ENCODE measurements at regions of chr6 and their contacts with region 1.

Region 1: GRCh38 chr6:33914645-33915044 is 110.8 kb upstream of the MLN start:
- DNase-seq: peak in 13 of 14 experiments; percentile 24 to 75 (median 45)
- ATAC-seq: peak; percentile 92
- H3K4me3 ChIP-seq: peak overlapping the region; percentile 10
- H3K4me3 Mint-ChIP-seq: peak overlapping the region; percentile 81
- H3K27ac ChIP-seq: peak overlapping the region in 1 of 2 donors; percentile 55
- H3K27ac Mint-ChIP-seq: peak overlapping the region; percentile 71
- H3K4me1 ChIP-seq: peaks cover 57% of the 10 kb centered on the region
- H3K4me1 Mint-ChIP-seq: peaks cover 63% of the 10 kb centered on the region
- H3K27me3 ChIP-seq: no peaks in the 10 kb centered on the region
- H3K27me3 Mint-ChIP-seq: no peaks in the 10 kb centered on the region
- CTCF ChIP-seq: no peak

Region 2: GRCh38 chr6:33860706-33861474 is 53.8 kb before region 1 on chr6:
- CTCF ChIA-PET with region 1: no interaction called
- POLR2A ChIA-PET with region 1: interaction called, 13 read pairs
- intact Hi-C with region 1: no loop called
- DNase-seq: peak in 11 of 14 experiments; percentile 5 to 63 (median 34)
- ATAC-seq: peak; percentile 57
- H3K4me3 ChIP-seq: no peak overlapping the region
- H3K4me3 Mint-ChIP-seq: peak overlapping the region; percentile 39
- H3K27ac ChIP-seq: no peak overlapping the region
- H3K27ac Mint-ChIP-seq: peak overlapping the region; percentile 10
- H3K4me1 ChIP-seq: peaks cover 73% of the 10 kb centered on the region
- H3K4me1 Mint-ChIP-seq: peaks cover 71% of the 10 kb centered on the region
- H3K27me3 ChIP-seq: peaks cover 0 to 10% of the 10 kb centered on the region in 2 experiments
- H3K27me3 Mint-ChIP-seq: no peaks in the 10 kb centered on the region
- CTCF ChIP-seq: no peak

Measured in CD4-positive, alpha-beta T cell (primary cell).